ENCODE measurements at regions of chr2 and their contacts with region 1.

Region 1: DNA sequence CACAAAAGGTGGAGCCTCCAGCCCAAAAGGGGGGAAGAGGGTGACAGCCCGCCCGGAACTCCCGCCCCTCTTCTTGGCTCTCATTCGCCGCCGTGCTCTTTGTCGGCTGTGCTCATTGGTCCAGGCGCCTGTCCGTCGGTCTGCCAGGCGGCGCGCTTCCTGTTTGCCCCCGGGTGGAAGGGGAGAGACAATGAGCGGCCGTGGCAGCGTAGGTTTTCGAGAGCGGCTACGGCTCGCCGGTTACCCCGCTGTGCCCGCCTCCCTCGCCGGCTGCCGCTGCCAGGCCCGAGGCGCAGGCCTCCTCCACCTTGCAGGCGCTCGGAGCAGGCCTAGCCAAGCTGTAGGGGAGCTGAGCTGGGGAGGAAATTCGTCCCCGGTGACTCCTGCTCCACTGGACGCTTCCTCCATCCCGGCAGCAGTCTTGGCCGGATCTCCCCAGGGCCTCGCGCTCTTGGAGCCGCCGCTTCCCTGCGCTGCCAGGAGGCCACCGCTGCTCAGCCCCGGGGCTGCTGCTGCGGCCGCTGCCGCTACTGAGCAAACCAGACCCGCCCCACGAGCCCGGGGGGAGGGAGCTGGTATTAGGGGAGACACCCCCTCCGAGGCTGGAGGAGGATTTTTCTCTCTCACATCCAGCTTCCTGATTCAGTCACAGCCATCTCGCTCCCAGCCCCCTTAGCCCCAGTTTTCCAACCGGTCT is at the start of gene SP3:
- DNase-seq: peak; percentile 98
- ATAC-seq: peak; percentile 80
- H3K4me3 Mint-ChIP-seq: peak within 1 kb of the TSS; percentile 79
- H3K27ac Mint-ChIP-seq: peak within 1 kb of the TSS; percentile 100
- H3K4me1 Mint-ChIP-seq: peaks cover 27% of the 10 kb centered on the region
- H3K27me3 Mint-ChIP-seq: no peaks in the 10 kb centered on the region
- total RNA-seq, gene SP3: 83.8 to 91.4 TPM

Region 2: DNA sequence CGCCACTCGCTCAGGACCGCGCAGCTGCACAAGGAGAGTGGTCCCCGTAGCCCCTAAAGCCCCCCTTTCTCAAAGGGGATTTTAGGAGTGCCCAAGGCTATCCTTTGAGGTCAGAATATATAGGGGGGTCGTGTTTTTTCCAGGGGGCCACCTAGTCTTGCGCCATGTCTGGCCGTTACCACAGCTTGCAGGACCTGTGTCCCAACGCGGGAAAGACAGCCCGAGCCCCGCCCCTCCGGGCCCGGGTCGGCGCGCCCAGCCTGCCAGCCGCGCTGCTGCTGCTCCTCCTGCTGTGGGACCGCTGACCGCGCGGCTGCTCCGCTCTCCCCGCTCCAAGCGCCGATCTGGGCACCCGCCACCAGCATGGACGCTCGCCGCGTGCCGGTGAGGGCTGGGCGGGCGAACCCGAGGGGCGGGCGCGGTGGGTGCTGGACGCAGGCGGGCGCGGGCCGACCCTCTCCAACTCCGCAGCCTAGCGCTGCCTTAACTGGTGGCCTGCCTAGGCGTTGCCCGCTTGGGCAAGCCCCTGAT is 610.8 kb before region 1 on chr2 and contains the start of gene CDCA7:
- CTCF ChIA-PET with region 1: no interaction called
- POLR2A ChIA-PET with region 1: interaction called, 3 read pairs
- intact Hi-C with region 1: loop called in 1 of 2 experiments (anchors 2 kb)
- DNase-seq: peak; percentile 86
- ATAC-seq: peak; percentile 68
- H3K4me3 Mint-ChIP-seq: peak within 1 kb of the TSS; percentile 87
- H3K27ac Mint-ChIP-seq: peak within 1 kb of the TSS; percentile 97
- H3K4me1 Mint-ChIP-seq: peaks cover 37% of the 10 kb centered on the region
- H3K27me3 Mint-ChIP-seq: peaks cover 46% of the 10 kb centered on the region
- total RNA-seq, gene CDCA7: 80.4 to 88.2 TPM

Region 3: DNA sequence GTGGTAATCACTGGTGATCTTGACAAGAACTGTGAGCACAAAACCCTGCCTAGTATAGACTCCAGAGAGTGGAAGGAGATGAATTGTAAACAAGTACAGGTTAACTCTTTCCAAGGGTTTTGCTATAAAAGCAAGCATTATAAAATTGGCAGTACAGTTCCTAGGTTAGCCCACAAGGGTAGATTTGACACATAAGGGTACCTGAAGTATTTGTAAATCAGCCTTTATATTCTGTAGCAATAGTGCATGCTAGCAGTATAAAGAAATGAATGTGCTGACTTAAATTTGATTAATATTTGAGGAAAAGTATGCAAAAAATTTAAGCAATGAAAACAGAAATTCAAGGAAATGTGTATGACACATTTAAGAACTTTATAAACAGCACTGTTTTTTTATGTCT is 42.7 kb before region 1 on chr2:
- CTCF ChIA-PET with region 1: no interaction called
- POLR2A ChIA-PET with region 1: no interaction called
- intact Hi-C with region 1: loop called in 1 of 2 experiments (anchors 2 kb)
- DNase-seq: no peak
- ATAC-seq: peak; percentile 52
- H3K4me3 Mint-ChIP-seq: no peak overlapping the region
- H3K27ac Mint-ChIP-seq: no peak overlapping the region
- H3K4me1 Mint-ChIP-seq: peaks cover 63% of the 10 kb centered on the region
- H3K27me3 Mint-ChIP-seq: no peaks in the 10 kb centered on the region

Region 4: GRCh38 chr2:173978447-173978846 is 13.0 kb after region 1 on chr2:
- CTCF ChIA-PET with region 1: interaction called, 5 read pairs
- POLR2A ChIA-PET with region 1: no interaction called
- intact Hi-C with region 1: loop called (anchors 1 to 2 kb)
- DNase-seq: peak; percentile 59
- ATAC-seq: peak; percentile 99
- H3K4me3 Mint-ChIP-seq: no peak overlapping the region
- H3K27ac Mint-ChIP-seq: peak overlapping the region; percentile 42
- H3K4me1 Mint-ChIP-seq: peaks cover 30% of the 10 kb centered on the region
- H3K27me3 Mint-ChIP-seq: peaks cover 4% of the 10 kb centered on the region

Region 5: GRCh38 chr2:174039551-174040416 is 74.3 kb after region 1 on chr2:
- CTCF ChIA-PET with region 1: interaction called, 4 read pairs
- POLR2A ChIA-PET with region 1: interaction called, 3 read pairs
- intact Hi-C with region 1: loop called (anchors 1 to 5 kb)
- DNase-seq: peak; percentile 92
- ATAC-seq: peak; percentile 96
- H3K4me3 Mint-ChIP-seq: peak overlapping the region; percentile 37
- H3K27ac Mint-ChIP-seq: peak overlapping the region; percentile 93
- H3K4me1 Mint-ChIP-seq: peaks cover 18% of the 10 kb centered on the region
- H3K27me3 Mint-ChIP-seq: peaks cover 5% of the 10 kb centered on the region

Region 6: DNA sequence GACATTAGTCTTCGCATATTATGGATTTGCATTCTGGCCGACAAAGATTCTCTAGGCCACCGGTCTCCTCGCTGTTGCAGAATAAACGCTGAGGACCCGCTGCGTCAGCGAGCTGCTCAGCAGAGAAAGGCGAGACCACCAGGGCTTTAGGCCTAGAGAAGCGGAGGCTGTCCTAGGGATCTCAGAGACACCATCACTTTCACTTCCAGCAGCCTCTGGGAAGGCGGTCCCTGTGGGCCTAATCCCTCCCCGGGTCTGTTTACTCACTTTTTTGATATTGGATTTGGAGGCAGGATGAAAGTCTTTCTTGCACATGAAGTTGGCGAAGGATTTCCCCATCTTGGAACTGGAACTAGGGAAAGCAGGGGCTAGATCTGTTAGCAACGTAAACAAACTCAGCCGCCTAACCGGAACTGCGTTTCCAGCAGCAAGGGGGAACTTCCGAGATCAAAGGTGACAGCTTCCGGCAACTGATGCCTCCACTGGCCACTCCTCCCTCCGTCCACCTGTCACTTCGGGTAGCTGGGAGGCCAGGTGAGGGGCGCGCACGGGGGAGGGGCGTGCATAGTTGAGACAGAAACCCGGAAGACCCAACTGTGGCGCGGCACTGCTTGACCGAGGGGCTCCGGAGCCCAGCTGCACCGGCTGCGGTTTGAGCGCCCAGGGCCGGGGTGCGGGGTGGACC is 429.9 kb after region 1 on chr2 and contains the start of gene SCRN3:
- CTCF ChIA-PET with region 1: no interaction called
- POLR2A ChIA-PET with region 1: no interaction called
- intact Hi-C with region 1: loop called in 1 of 2 experiments (anchors 1 kb)
- DNase-seq: peak; percentile 85
- ATAC-seq: peak; percentile 93
- H3K4me3 Mint-ChIP-seq: peak within 1 kb of the TSS; percentile 100
- H3K27ac Mint-ChIP-seq: peak within 1 kb of the TSS; percentile 99
- H3K4me1 Mint-ChIP-seq: peaks cover 35% of the 10 kb centered on the region
- H3K27me3 Mint-ChIP-seq: no peaks in the 10 kb centered on the region
- total RNA-seq, gene SCRN3: 12.7 to 14.1 TPM

Region 7: GRCh38 chr2:174593574-174594203 is 628.2 kb after region 1 on chr2:
- CTCF ChIA-PET with region 1: no interaction called
- POLR2A ChIA-PET with region 1: no interaction called
- intact Hi-C with region 1: loop called (anchors 2 to 5 kb)
- DNase-seq: peak; percentile 80
- ATAC-seq: peak; percentile 67
- H3K4me3 Mint-ChIP-seq: peak overlapping the region; percentile 70
- H3K27ac Mint-ChIP-seq: peak overlapping the region; percentile 97
- H3K4me1 Mint-ChIP-seq: peaks cover 63% of the 10 kb centered on the region
- H3K27me3 Mint-ChIP-seq: no peaks in the 10 kb centered on the region

Region 8: DNA sequence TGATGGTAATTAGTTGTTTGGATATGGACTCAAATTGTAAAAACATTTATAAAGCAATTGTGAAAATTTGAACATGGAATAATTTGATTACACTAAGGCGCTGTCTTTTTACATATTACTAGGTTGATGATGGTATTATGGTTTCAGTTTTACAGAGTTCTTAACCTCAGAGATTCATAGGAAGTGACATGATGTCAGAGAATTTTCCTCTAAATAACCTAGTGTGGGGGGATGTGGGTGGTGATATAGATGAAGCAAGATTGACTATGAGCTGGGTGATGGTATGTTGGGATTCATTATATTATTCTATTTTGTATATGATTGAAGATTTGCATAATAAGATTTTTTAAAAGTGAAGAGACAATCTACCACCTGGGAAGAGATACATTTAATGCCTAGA is 1261.9 kb after region 1 on chr2:
- CTCF ChIA-PET with region 1: no interaction called
- POLR2A ChIA-PET with region 1: no interaction called
- intact Hi-C with region 1: no loop called
- DNase-seq: no peak
- ATAC-seq: peak; percentile 89
- H3K4me3 Mint-ChIP-seq: no peak overlapping the region
- H3K27ac Mint-ChIP-seq: peak overlapping the region; percentile 25
- H3K4me1 Mint-ChIP-seq: peaks cover 15% of the 10 kb centered on the region
- H3K27me3 Mint-ChIP-seq: peaks cover 11% of the 10 kb centered on the region